ENCODE measurements at regions of chr16 and their contacts with region 1.

Region 1: DNA sequence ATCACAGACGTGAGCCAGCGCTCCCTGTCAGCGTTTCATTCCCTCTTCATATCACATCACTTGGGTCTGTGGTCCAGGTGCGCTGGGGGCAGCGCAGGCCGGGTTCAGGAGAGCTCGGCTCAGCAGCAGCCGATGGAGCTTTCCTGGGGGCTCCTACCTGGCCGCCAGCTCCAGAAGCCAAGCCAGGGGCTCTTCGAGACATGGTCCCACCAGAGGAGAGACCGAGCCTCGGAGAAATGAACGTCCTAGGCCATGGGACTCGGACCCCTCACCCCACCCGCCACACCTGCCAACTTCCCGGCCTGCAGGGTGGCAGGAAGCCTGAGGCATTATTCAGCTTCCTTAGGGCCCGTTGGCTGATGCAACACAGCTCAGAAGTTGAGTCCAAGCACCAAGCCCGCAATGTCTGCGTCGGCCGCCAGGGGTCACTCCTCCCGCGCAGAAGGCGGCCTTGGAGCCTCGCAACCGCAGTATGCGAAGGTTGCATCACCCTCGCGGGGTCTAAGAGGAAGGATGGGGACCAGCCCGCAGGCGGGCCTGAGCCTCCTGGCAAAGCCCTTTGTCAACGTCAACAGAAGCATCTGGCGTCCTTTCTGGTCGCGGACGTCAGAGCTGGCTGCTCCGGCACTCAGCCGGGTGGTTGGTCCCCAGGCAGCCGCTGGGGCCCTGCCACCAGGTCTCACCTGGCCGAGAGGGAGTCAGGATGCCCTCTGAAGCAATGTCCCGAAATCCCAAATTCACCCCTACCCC is 13.2 kb upstream of the KLHDC4 start:
- DNase-seq: peak; percentile 97
- H3K4me3 Mint-ChIP-seq: peak overlapping the region; percentile 75
- H3K27ac Mint-ChIP-seq: peak overlapping the region; percentile 95
- H3K4me1 Mint-ChIP-seq: peaks cover 43% of the 10 kb centered on the region
- H3K27me3 Mint-ChIP-seq: no peaks in the 10 kb centered on the region

Region 2: DNA sequence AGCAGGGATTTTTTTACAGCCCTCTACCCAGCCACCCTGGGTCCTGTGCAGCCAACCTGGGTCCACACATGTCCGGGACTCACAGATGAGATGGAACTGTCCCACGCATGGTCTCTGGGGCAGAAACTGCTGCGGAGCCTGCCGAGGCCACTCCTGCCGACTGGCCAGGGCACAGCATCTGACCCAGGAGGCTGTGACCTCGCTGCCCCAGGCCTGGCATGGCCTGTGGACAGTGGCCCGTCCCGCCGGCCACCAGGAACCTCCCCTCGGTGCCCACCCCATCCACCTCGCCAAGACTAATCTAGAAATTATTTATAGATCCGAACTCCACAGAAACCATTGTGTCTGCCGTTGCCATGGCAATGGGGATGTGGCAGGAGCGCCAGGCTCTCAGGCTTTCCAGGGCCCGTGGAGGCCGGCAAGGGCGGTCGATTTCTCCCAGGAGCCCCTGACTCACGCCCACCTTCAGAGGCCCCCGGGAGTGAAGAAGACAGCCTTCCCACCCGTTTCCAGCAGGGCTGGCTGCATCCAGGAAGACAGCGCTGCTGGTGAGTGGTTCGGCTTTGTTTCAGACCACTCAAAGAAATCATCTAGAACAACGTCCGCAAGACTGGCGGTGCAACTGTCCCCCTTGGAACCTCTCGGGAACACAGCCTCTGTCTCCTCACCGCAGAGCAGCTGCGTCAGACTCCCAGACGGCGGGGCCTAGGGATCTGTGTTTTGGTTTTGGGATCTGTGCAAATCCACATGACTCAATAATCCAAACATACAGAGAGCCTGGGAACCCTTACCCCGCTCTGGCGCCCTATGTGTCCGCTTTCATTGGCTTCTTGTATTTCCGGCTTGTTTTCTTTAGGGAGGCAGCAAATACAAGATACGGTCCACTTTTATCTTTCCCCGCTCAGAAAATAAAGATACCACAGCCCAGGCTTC is 237.8 kb before region 1 on chr16:
- CTCF ChIA-PET with region 1: no interaction called
- POLR2A ChIA-PET with region 1: no interaction called
- intact Hi-C with region 1: no loop called
- DNase-seq: no peak
- H3K4me3 Mint-ChIP-seq: no peak overlapping the region
- H3K27ac Mint-ChIP-seq: no peak overlapping the region
- H3K4me1 Mint-ChIP-seq: peaks cover 15% of the 10 kb centered on the region
- H3K27me3 Mint-ChIP-seq: peaks cover 28% of the 10 kb centered on the region

Region 3: DNA sequence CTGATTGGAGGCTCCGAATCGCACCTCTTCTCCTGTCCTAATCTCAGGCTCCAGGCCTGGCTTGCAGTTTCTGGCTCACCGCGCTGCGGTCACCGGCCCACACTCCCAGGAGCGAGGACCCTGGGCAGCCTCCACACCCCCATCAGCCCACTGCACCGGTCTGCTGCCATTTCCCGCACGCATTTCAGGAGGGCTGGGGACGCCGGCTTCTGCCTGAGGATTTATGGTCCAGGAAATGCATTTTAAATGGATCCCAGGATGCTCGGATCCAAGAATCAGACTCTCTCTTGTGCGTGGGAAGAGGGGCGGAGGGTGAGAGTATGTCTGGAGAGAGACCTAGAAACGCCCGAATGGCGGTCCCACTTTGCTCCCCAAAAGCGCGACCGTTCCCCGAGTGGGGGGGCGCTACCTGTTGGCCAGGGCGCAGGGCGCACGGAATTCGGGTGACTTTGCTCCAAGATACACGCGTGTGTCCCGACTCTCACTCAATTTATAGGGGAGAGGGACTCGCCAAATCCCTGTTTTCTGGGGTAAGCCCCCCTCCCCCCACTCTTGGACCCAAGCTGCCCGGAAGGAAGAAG is 177.5 kb before region 1 on chr16:
- CTCF ChIA-PET with region 1: no interaction called
- POLR2A ChIA-PET with region 1: no interaction called
- intact Hi-C with region 1: no loop called
- DNase-seq: no peak
- H3K4me3 Mint-ChIP-seq: no peak overlapping the region
- H3K27ac Mint-ChIP-seq: no peak overlapping the region
- H3K4me1 Mint-ChIP-seq: peaks cover 10% of the 10 kb centered on the region
- H3K27me3 Mint-ChIP-seq: peaks cover 56% of the 10 kb centered on the region

Region 4: DNA sequence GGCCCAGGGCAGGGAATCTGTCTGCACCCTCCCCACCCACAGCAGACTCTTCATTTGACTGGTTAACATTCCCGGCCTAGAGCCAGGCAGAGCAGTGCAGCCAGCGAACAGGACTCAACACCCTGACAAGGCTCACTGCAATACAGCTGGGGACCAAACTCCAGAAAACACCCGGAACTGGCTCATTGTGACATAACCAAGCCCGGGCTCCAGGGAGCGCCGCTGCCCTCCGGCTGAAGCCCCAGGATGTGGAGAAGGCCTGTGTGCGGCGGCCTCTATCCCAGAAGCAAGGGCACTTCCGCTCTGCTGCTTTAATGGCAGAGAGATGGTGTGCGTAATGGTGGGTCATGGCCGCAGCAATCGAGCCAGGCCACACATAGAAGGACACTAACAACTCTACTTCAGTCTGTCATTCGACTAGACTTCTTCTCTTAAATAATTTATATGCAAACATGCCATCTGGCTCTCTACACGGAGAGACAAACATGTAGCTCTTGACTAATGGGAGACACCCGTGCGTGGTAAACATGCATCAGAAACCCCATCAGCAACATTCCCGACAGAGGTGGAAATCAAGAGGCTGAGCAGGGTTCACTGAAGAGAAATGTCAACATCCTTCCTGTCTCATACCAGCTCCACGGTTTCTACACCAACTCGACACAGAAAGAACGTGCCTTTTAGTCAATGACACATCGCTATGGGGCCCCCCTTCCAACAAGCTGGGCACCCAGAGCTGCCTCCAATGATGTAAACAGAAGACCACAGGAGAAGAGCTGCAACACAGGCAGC is 31.2 kb before region 1 on chr16:
- CTCF ChIA-PET with region 1: no interaction called
- POLR2A ChIA-PET with region 1: no interaction called
- intact Hi-C with region 1: no loop called
- DNase-seq: no peak
- H3K4me3 Mint-ChIP-seq: no peak overlapping the region
- H3K27ac Mint-ChIP-seq: no peak overlapping the region
- H3K4me1 Mint-ChIP-seq: no peaks in the 10 kb centered on the region
- H3K27me3 Mint-ChIP-seq: no peaks in the 10 kb centered on the region

Region 5: DNA sequence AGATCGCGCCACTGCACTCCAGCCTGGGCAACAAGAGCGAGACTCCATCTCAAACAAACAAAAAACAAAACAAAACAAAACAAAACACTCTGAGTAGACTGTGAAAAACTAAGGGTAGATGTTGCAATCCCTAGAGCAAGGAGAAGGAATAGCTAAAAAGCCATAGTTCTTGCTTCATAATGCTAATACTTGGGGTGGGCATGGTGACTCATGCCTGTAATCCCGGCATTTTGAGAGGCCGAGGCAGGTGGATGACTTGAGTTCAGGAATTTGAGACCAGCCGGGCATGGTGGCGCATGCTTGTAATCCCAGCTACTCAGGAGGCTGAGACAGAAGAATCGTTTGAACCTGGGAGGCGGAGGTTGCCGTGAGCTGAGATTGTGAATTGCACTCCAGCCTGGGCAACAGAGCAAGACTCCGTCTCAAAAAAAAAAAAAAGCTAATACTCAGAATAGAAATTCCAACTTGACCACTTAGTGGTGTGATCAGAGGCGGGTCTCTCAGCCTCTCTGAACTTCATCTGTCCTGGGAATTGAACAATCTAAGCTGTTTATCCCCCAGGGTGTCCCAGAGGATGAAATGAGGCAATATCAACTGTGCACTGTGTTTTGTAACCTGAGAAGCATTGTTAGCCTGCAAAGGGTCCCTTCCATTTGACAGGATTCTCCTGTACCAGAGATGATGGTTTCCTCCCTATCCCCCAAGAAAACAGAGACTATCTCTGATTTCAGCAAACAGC is 14.9 kb after region 1 on chr16:
- CTCF ChIA-PET with region 1: interaction called, 10 read pairs
- POLR2A ChIA-PET with region 1: no interaction called
- intact Hi-C with region 1: no loop called
- DNase-seq: no peak
- H3K4me3 Mint-ChIP-seq: no peak overlapping the region
- H3K27ac Mint-ChIP-seq: no peak overlapping the region
- H3K4me1 Mint-ChIP-seq: no peaks in the 10 kb centered on the region
- H3K27me3 Mint-ChIP-seq: no peaks in the 10 kb centered on the region

Region 6: DNA sequence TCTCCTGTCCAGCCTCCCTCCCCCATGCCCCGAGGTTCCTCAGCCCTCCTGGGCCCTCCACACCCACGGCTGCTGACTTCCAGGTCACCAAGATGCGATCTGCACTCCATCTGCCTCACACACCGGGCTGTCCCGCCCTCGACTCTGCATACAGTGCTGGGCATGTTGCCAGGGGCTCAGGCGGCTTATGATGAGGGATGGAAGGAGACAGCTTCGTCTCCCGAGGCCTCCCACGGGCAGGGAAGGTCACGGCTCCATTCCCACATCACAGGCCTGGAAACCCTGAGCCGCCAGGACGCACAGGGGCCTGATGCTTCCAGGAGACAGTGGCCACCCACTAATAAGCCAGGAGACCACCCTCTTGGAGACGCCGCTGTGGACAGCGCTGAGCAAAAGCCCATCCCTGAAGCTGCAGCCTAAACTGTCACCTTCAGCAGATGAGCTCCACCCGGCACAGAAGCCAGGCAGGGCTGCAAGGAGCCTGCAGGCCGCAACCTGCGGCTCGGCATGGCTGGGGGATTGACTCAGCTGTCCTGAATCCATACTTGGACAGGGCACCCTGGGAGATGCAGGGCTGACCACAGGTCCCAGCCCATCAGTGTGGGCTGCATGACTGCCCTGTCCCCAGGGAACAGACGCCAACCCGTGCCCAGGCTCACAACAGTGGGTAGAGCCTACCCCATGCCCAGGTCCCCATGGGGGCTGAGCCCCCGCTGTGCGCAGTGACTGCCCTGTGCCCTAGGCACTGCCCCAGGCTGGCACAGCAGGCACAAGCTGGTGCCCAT is 55.8 kb after region 1 on chr16:
- CTCF ChIA-PET with region 1: interaction called, 11 read pairs
- POLR2A ChIA-PET with region 1: interaction called, 4 read pairs
- intact Hi-C with region 1: no loop called
- DNase-seq: no peak
- H3K4me3 Mint-ChIP-seq: no peak overlapping the region
- H3K27ac Mint-ChIP-seq: no peak overlapping the region
- H3K4me1 Mint-ChIP-seq: no peaks in the 10 kb centered on the region
- H3K27me3 Mint-ChIP-seq: no peaks in the 10 kb centered on the region

Region 7: GRCh38 chr16:87853411-87854052 is 74.5 kb after region 1 on chr16:
- CTCF ChIA-PET with region 1: interaction called, 64 read pairs
- POLR2A ChIA-PET with region 1: interaction called, 5 read pairs
- intact Hi-C with region 1: loop called (anchors 1 kb)
- DNase-seq: peak; percentile 95
- H3K4me3 Mint-ChIP-seq: peak overlapping the region; percentile 53
- H3K27ac Mint-ChIP-seq: peak overlapping the region; percentile 88
- H3K4me1 Mint-ChIP-seq: peaks cover 60% of the 10 kb centered on the region
- H3K27me3 Mint-ChIP-seq: no peaks in the 10 kb centered on the region

Region 8: DNA sequence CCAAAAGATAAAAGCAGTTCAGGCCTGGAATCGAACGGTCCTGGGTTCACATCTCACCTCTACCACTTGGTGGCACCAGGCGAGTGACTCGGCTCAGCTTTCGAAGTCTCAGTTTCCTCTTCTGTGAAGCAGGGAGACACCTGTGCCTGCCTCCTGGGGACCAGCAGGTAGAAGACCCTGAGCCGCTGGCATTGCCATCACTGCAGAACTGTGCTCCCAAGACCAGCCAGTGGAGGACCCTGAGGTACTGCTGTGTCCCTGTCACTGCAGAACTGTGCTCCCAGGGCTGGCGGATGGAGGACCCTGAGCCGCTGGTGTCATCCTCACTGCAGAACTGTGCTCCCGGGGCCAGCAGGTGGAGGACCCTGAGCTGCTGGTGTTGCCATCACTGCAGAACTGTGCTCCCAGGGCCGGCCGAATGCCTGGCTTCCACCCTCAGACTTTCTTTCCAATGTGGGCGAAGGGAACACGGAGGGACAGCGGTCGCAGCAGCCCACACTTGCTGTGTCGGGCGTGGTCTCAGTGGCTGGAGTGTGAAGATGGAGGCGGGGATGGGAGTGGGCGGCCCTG is 99.0 kb after region 1 on chr16:
- CTCF ChIA-PET with region 1: interaction called, 275 read pairs
- POLR2A ChIA-PET with region 1: interaction called, 43 read pairs
- intact Hi-C with region 1: no loop called
- DNase-seq: peak; percentile 68
- H3K4me3 Mint-ChIP-seq: no peak overlapping the region
- H3K27ac Mint-ChIP-seq: no peak overlapping the region
- H3K4me1 Mint-ChIP-seq: peaks cover 39% of the 10 kb centered on the region
- H3K27me3 Mint-ChIP-seq: peaks cover 2% of the 10 kb centered on the region

Region 9: GRCh38 chr16:87914812-87915211 is 135.8 kb after region 1 on chr16:
- CTCF ChIA-PET with region 1: interaction called, 33 read pairs
- POLR2A ChIA-PET with region 1: interaction called, 3 read pairs
- intact Hi-C with region 1: no loop called
- DNase-seq: no peak
- H3K4me3 Mint-ChIP-seq: no peak overlapping the region
- H3K27ac Mint-ChIP-seq: no peak overlapping the region
- H3K4me1 Mint-ChIP-seq: no peaks in the 10 kb centered on the region
- H3K27me3 Mint-ChIP-seq: peaks cover 12% of the 10 kb centered on the region

Region 10: GRCh38 chr16:87993901-87994300 is 214.9 kb after region 1 on chr16:
- CTCF ChIA-PET with region 1: no interaction called
- POLR2A ChIA-PET with region 1: no interaction called
- intact Hi-C with region 1: no loop called
- DNase-seq: no peak
- H3K4me3 Mint-ChIP-seq: no peak overlapping the region
- H3K27ac Mint-ChIP-seq: no peak overlapping the region
- H3K4me1 Mint-ChIP-seq: no peaks in the 10 kb centered on the region
- H3K27me3 Mint-ChIP-seq: no peaks in the 10 kb centered on the region

Region 11: DNA sequence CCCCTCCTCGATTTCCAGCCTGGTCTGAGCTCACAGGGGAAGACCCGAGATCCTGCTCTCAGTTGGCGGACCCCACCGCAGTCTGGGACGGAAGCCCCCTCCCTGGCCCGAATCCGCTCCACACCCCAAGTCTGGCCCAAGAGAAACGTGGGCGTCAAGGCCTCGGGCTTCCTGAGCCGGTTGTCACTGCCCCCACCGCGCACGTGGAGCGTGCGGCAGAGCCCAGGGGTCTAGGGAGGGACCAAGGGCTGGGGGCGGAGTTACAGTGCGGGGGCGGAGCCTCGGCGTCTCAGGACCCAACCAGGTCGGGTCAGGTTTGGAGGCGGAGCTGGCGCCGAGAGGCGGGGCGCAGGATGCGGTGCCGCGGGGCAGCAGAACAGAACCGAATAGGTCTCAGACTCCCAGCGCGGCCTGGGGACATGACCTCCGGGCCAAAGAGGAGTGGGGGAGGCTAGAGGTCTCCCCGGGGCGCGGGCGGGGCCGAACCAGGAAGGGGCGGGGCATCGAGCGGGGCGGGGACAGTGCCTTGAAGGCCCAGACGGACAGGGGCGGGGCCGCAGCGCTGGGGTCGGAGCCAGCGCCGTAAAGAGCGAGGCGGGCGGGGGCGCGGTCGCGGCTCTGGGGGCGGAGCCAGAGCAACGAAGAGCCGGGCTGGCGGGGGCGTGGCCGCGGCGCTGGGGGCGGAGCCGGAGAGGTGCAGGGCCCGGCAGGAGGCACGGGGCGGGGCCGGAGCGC is 673.6 kb after region 1 on chr16:
- CTCF ChIA-PET with region 1: no interaction called
- POLR2A ChIA-PET with region 1: no interaction called
- intact Hi-C with region 1: loop called (anchors 10 kb)
- DNase-seq: peak; percentile 99
- H3K4me3 Mint-ChIP-seq: peak overlapping the region; percentile 80
- H3K27ac Mint-ChIP-seq: peak overlapping the region; percentile 84
- H3K4me1 Mint-ChIP-seq: peaks cover 25% of the 10 kb centered on the region
- H3K27me3 Mint-ChIP-seq: no peaks in the 10 kb centered on the region

Measured in activated CD4-positive, alpha-beta memory T cell treated with anti-CD3 and anti-CD28 coated beads for 36 hours (primary cell).